ENCODE measurements at regions of chr11 and their contacts with region 1.

Region 1: DNA sequence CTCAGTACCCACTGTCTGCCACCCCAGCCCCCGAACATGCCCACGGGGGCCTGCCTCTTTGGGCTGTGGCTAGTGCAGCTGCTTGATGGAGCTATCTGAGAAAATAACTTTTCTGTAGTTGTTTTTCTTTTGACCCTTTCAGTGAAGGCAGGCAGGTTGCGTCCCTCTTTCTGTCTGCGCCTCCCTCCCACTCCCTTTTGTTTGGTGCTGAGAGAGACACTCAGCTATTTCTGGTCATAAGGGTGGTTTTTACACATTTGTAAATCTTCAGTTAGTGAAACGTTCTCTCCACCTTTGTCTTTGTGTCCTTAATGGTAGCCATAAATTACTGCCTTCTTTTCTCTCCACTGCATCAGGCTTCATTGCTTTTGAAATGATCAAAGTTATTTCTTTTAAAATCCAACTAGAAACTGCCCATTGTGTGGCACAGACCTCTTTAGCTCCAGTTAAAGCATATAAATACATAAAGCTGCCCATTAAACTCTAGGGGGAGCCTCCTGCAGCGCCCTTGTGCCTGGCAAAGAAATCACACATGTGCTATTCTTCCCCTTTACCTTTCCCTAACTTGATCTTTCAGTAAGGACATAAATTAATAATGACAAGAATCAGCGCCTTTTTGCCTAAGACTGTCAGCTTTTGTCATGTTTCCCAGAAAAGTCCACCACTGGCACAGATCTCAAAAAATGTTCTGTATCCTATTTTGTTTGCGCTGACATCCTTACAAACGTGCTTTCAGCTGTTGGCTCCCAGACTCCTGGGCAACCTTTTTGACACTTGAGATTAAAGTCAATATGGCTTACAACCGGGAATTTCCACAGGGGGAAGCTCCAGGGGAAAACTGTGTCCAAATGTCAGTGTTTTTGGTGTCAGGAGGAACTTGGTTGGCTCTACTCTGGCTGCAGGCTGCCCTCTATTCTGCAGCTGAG is 1.7 kb upstream of the SCUBE2 start:
- DNase-seq: no peak
- ATAC-seq: no peak
- H3K4me3 Mint-ChIP-seq: peak overlapping the region; percentile 58
- H3K27ac Mint-ChIP-seq: no peak overlapping the region
- H3K4me1 Mint-ChIP-seq: peaks cover 12% of the 10 kb centered on the region
- H3K27me3 Mint-ChIP-seq: peaks cover 49% of the 10 kb centered on the region
- CTCF ChIP-seq: no peak

Region 2: GRCh38 chr11:8997451-8997850 is 95.7 kb before region 1 on chr11:
- CTCF ChIA-PET with region 1: no interaction called
- POLR2A ChIA-PET with region 1: no interaction called
- DNase-seq: no peak
- ATAC-seq: no peak
- H3K4me3 Mint-ChIP-seq: no peak overlapping the region
- H3K27ac Mint-ChIP-seq: no peak overlapping the region
- H3K4me1 Mint-ChIP-seq: peaks cover 2% of the 10 kb centered on the region; the same call in 1 of the 2 replicates
- H3K27me3 Mint-ChIP-seq: peaks cover 25% of the 10 kb centered on the region
- CTCF ChIP-seq: no peak

Region 3: DNA sequence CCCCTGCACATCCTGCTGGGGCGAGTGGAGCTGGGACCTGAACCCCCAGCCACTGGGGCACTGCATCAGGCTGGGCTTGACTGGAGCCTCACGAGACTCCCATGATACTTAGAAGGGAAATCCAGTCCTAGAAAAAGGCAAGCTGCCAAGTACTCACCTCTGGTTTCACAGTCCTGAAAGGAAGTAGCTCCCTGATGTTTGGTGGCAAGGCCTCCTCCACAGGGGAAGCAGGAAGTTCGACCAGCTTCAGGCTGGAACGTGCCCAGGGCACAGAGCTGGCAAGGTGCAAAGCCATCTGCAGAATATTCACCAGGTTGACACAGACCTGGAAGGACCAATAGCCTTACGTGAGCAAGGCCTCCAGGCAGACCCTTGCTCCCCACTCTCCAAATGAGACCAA is 62.5 kb before region 1 on chr11:
- CTCF ChIA-PET with region 1: interaction called, 15 read pairs
- POLR2A ChIA-PET with region 1: no interaction called
- DNase-seq: no peak
- ATAC-seq: no peak
- H3K4me3 Mint-ChIP-seq: no peak overlapping the region
- H3K27ac Mint-ChIP-seq: no peak overlapping the region
- H3K4me1 Mint-ChIP-seq: no peaks in the 10 kb centered on the region
- H3K27me3 Mint-ChIP-seq: no peaks in the 10 kb centered on the region; the same call in 1 of the 2 replicates
- CTCF ChIP-seq: no peak

Region 4: GRCh38 chr11:9078113-9079086 is 14.7 kb before region 1 on chr11:
- CTCF ChIA-PET with region 1: interaction called, 32 read pairs
- POLR2A ChIA-PET with region 1: no interaction called
- DNase-seq: no peak
- ATAC-seq: peak; percentile 87
- H3K4me3 Mint-ChIP-seq: no peak overlapping the region
- H3K27ac Mint-ChIP-seq: no peak overlapping the region
- H3K4me1 Mint-ChIP-seq: peaks cover 8% of the 10 kb centered on the region
- H3K27me3 Mint-ChIP-seq: no peaks in the 10 kb centered on the region; the same call in 1 of the 2 replicates
- CTCF ChIP-seq: no peak

Region 5: DNA sequence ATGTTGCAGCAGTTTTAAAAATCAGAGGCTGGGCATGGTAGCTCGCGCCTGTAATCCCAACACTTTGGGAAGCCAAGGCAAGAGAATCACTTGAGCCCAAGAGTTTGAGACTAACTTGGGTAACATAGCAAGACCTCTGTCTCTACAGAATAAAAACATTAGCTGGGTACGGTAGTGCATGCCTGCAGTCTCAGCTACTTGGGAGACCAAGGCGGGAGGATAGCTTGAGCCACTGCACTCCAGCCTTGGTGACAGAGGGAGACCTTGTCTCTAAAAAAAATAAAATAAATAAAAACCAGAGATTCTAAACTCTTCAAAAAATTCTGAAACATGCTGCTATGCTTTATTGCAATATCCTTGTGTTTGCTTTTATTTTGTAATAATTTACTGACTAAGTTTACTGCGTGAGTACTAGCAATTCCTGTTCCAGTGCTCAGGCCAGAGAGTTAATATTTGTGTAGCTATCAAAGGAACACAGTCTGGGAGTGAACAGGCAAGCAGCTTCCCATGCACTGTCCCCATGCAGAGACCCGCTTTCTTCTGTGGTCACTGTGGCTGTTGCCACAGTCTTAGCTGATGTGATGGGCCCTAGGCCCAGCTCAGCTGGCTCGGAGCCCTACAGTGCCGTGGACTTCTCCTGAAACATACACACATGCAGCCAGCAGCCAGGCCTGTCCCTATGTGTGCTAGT is 10.2 kb after region 1 on chr11:
- CTCF ChIA-PET with region 1: interaction called, 11 read pairs
- POLR2A ChIA-PET with region 1: no interaction called
- DNase-seq: no peak
- ATAC-seq: no peak
- H3K4me3 Mint-ChIP-seq: no peak overlapping the region
- H3K27ac Mint-ChIP-seq: no peak overlapping the region
- H3K4me1 Mint-ChIP-seq: no peaks in the 10 kb centered on the region
- H3K27me3 Mint-ChIP-seq: no peaks in the 10 kb centered on the region
- CTCF ChIP-seq: no peak

Region 6: DNA sequence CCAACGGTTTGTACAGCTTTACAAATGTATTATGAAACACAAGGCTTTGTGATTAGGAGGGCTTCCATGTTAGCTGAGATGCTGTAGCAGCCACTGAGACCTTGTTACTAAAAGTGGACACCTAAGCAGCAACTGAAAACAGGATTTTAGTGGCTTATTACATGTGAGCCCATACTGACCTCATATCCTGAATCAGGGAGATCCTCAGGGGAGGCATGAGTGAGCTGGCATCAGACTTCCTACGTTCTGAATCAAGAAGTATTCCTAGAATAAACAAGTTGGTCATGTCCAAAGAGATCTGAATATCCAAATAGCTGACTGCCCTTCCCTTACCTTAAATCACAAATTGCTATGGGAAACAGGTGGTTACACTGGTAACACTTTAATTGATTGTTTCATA is 57.4 kb after region 1 on chr11:
- CTCF ChIA-PET with region 1: no interaction called
- POLR2A ChIA-PET with region 1: no interaction called
- DNase-seq: no peak
- ATAC-seq: no peak
- H3K4me3 Mint-ChIP-seq: no peak overlapping the region
- H3K27ac Mint-ChIP-seq: no peak overlapping the region
- H3K4me1 Mint-ChIP-seq: no peaks in the 10 kb centered on the region
- H3K27me3 Mint-ChIP-seq: no peaks in the 10 kb centered on the region
- CTCF ChIP-seq: no peak

Measured in WTC11 (cell line).